A673 (cell line): ENCODE measurements at regions of chr2 and their contacts with region 1.

Region 1: GRCh38 chr2:177646241-177646640 is 253.7 kb downstream of the AGPS start:
- DNase-seq: no peak
- H3K4me3 ChIP-seq: no peak overlapping the region
- H3K27ac ChIP-seq: no peak overlapping the region
- H3K4me1 ChIP-seq: no peaks in the 10 kb centered on the region
- H3K27me3 ChIP-seq: no peaks in the 10 kb centered on the region
- CTCF ChIP-seq: no peak

Region 2: DNA sequence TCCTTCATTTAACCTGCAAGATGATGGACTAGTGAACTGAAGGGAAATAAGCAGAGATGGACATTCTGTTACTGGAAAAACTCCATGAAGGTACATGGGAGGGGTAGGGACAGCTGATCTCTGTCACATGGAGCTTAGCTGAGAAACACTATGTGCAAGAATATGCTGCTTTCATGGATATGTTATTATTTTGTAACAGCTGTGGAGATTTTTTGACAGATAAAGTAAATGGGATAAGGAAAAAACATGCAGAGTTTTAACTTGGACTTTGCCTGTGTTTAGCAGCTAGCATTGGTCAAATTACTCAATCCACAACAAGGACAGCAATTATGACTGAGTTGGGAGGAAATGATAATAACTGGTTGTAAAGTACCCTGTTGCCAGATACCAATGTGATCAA is 462.4 kb before region 1 on chr2:
- CTCF ChIA-PET with region 1: no interaction called
- POLR2A ChIA-PET with region 1: interaction called, 13 read pairs
- intact Hi-C with region 1: no loop called
- DNase-seq: no peak
- H3K4me3 ChIP-seq: no peak overlapping the region
- H3K27ac ChIP-seq: no peak overlapping the region
- H3K4me1 ChIP-seq: peaks cover 10% of the 10 kb centered on the region
- H3K27me3 ChIP-seq: no peaks in the 10 kb centered on the region
- CTCF ChIP-seq: no peak